Mammary epithelial cell (primary cell): ENCODE measurements at regions of chr5 and their contacts with region 1.

Region 1: DNA sequence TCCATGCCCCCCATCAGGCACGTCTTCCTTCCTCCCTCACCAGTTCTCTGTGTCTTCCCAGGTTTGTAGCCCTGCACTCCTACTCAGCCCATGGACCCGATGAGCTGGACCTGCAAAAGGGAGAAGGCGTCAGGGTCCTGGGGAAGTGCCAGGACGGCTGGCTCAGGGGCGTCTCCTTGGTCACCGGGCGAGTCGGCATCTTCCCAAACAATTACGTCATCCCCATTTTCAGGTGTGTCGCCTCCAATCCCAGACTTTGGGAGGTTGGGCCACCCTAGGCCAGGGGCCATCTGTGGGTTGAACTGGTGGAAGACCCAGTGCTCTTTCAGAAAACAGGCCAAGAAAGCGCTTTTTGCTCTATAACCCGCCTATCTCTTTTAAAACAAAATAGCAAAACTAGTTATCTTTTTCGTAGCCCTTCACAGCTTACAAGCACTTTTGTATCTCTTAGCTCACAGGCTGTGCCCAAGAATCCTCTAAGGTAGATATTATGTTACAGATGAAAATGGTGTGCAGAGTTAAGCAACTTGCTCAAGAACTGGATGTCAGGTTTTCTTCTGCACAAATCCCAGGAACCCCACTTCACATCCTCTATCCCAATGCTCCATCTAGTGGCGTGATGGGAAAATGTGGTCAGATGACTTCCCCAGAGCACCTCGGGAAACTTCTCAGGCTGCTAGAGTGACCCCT is 56.2 kb downstream of the PLAC8L1 start:
- DNase-seq: peak; percentile 61
- H3K4me3 ChIP-seq: no peak overlapping the region
- H3K27ac ChIP-seq: no peak overlapping the region
- H3K4me1 ChIP-seq: peaks cover 20% of the 10 kb centered on the region
- H3K27me3 ChIP-seq: no peaks in the 10 kb centered on the region
- CTCF ChIP-seq: peak; percentile 75 to 78

Region 2: DNA sequence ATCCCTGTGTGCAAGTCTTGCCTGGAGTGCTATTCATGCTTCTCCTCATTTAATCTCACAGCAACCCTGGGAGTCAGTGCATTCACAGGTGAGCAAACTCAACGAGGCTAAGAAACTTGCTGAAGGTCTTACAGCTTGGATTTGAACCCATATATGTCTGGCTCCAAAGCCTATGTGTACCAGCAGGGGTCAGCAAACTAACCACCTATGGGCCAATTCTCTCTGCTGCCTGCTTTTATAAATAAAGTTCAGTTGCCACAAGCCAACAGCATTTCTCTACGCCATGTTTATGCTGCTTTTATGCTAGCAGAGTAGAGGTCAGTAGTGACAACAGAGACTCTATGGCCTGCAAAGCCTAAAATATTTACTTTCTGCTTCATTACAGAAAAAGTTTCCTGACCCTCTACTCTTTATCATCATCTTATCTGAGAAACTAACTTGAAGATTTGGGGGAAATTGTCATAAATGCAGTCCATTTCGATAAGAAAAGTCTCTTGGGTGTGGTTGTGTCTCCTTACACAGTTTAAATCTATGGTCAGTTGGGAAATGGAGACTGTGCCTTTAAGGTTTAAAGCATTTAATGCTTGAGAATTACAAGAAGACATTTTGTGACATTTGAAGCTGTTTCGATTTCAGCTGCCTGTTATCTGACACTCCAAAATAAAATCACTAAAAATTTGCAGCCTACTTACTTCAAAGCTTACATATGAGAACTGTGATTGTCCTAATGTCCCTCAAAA is 351.7 kb before region 1 on chr5:
- CTCF ChIA-PET with region 1: no interaction called
- dilution Hi-C with region 1: no loop called
- in situ Hi-C with region 1: loop called in 1 of 2 experiments (anchors 25 kb)
- intact Hi-C with region 1: loop called (anchors 1 kb)
- DNase-seq: peak; percentile 19
- H3K4me3 ChIP-seq: no peak overlapping the region
- H3K27ac ChIP-seq: no peak overlapping the region
- H3K4me1 ChIP-seq: no peaks in the 10 kb centered on the region
- H3K27me3 ChIP-seq: no peaks in the 10 kb centered on the region
- CTCF ChIP-seq: peak; percentile 63 to 65

Region 3: GRCh38 chr5:145825751-145826180 is 223.4 kb before region 1 on chr5:
- CTCF ChIA-PET with region 1: no interaction called
- dilution Hi-C with region 1: loop called (anchors 25 kb)
- in situ Hi-C with region 1: no loop called
- intact Hi-C with region 1: loop called (anchors 2 kb)
- DNase-seq: peak; percentile 25
- H3K4me3 ChIP-seq: no peak overlapping the region
- H3K27ac ChIP-seq: no peak overlapping the region
- H3K4me1 ChIP-seq: peaks cover 5% of the 10 kb centered on the region
- H3K27me3 ChIP-seq: no peaks in the 10 kb centered on the region
- CTCF ChIP-seq: peak; percentile 87 to 90

Region 4: GRCh38 chr5:145908205-145908945 is 140.8 kb before region 1 on chr5:
- CTCF ChIA-PET with region 1: no interaction called
- dilution Hi-C with region 1: no loop called
- in situ Hi-C with region 1: loop called in 1 of 2 experiments (anchors 10 kb)
- intact Hi-C with region 1: loop called (anchors 1 kb)
- DNase-seq: no peak
- H3K4me3 ChIP-seq: no peak overlapping the region
- H3K27ac ChIP-seq: no peak overlapping the region
- H3K4me1 ChIP-seq: no peaks in the 10 kb centered on the region
- H3K27me3 ChIP-seq: no peaks in the 10 kb centered on the region
- CTCF ChIP-seq: peak; percentile 20 to 64

Region 5: GRCh38 chr5:145936401-145937131 is 112.6 kb before region 1 on chr5 and contains the start of gene SH3RF2:
- CTCF ChIA-PET with region 1: no interaction called
- dilution Hi-C with region 1: no loop called
- in situ Hi-C with region 1: no loop called
- intact Hi-C with region 1: loop called (anchors 1 kb)
- DNase-seq: peak; percentile 85
- H3K4me3 ChIP-seq: peak within 1 kb of the TSS; percentile 58 to 83 (median 75)
- H3K27ac ChIP-seq: peak within 1 kb of the TSS; percentile 84
- H3K4me1 ChIP-seq: peaks cover 44% of the 10 kb centered on the region
- H3K27me3 ChIP-seq: no peaks in the 10 kb centered on the region
- CTCF ChIP-seq: no peak
- total RNA-seq, gene SH3RF2: 57.3 to 76.1 TPM

Region 6: GRCh38 chr5:145976431-145977155 is 72.6 kb before region 1 on chr5:
- CTCF ChIA-PET with region 1: no interaction called
- dilution Hi-C with region 1: no loop called
- in situ Hi-C with region 1: no loop called
- intact Hi-C with region 1: no loop called
- DNase-seq: peak; percentile 77
- H3K4me3 ChIP-seq: no peak overlapping the region
- H3K27ac ChIP-seq: peak overlapping the region; percentile 88
- H3K4me1 ChIP-seq: peaks cover 39% of the 10 kb centered on the region
- H3K27me3 ChIP-seq: no peaks in the 10 kb centered on the region
- CTCF ChIP-seq: no peak

Region 7: GRCh38 chr5:146007270-146007669 is 41.9 kb before region 1 on chr5:
- CTCF ChIA-PET with region 1: no interaction called
- dilution Hi-C with region 1: no loop called
- in situ Hi-C with region 1: no loop called
- intact Hi-C with region 1: no loop called
- DNase-seq: no peak
- H3K4me3 ChIP-seq: no peak overlapping the region
- H3K27ac ChIP-seq: no peak overlapping the region
- H3K4me1 ChIP-seq: no peaks in the 10 kb centered on the region
- H3K27me3 ChIP-seq: no peaks in the 10 kb centered on the region
- CTCF ChIP-seq: peak in 1 of 2 donors; percentile 24